ENCODE measurements at regions of chr20 and their contacts with region 1.

Region 1: GRCh38 chr20:32207626-32208498 is at the starts of genes PLAGL2 and POFUT1:
- DNase-seq: peak; percentile 76 to 84
- ATAC-seq: peak; percentile 54 to 79
- H3K4me3 ChIP-seq: peak within 1 kb of the TSS; percentile 76 to 97 (median 96)
- H3K27ac ChIP-seq: peak within 1 kb of the TSS; percentile 89 to 97 (median 94)
- H3K4me1 ChIP-seq: peaks cover 48 to 69% of the 10 kb centered on the region in 2 donors
- H3K27me3 ChIP-seq: no peaks in the 10 kb centered on the region
- CTCF ChIP-seq: peak in 4 of 5 experiments; percentile 11 to 34 (median 23)
- POLR2A ChIP-seq: peak; percentile 90 to 94
- total RNA-seq, gene PLAGL2: 1.4 to 6.5 (median 5.8) TPM
- total RNA-seq, gene POFUT1: 15.3 to 20.7 (median 18.4) TPM

Region 2: DNA sequence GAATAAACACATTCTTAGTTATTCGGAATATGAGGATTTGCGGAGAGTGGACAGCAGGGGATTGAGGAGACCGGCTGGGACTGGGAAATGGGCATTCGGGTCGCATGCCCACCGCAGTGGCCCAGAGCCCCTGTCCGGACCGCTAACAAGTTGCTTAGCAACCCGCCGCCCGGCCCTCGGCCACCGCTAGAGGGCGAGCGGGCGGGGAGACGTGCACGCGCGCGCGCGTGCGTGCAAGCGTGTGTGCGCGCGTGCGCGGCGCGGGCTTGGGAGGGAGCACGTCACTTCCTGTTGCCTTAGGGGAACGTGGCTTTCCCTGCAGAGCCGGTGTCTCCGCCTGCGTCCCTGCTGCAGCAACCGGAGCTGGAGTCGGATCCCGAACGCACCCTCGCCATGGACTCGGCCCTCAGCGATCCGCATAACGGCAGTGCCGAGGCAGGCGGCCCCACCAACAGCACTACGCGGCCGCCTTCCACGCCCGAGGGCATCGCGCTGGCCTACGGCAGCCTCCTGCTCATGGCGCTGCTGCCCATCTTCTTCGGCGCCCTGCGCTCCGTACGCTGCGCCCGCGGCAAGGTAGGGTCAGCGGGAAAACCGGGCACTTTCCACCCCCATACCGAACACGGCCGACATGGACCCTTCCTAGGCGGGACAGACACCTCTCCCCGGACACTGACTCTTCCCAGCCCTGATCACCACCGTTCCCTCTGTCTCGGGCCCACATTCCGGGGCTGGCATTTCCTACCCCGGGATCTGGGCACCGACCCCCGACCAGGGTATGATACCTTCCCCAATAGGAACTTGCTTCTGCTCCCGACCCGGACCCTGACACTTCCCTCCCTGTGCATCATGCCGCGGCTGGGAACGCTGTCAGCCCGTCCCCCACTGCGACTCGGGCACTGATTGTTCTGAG is 693.4 kb before region 1 on chr20 and contains the start of gene HM13:
- in situ Hi-C with region 1: no loop called
- intact Hi-C with region 1: loop called (anchors 10 kb)
- DNase-seq: peak; percentile 86 to 89
- ATAC-seq: peak; percentile 89 to 93
- H3K4me3 ChIP-seq: peak within 1 kb of the TSS; percentile 72 to 96 (median 88)
- H3K27ac ChIP-seq: peak within 1 kb of the TSS; percentile 88 to 95 (median 90)
- H3K4me1 ChIP-seq: peaks cover 27 to 34% of the 10 kb centered on the region in 2 donors
- H3K27me3 ChIP-seq: no peaks in the 10 kb centered on the region
- CTCF ChIP-seq: peak; percentile 87 to 99 (median 99)
- POLR2A ChIP-seq: peak; percentile 89 to 96
- total RNA-seq, gene HM13: 22.7 to 31.0 (median 26.4) TPM

Region 3: DNA sequence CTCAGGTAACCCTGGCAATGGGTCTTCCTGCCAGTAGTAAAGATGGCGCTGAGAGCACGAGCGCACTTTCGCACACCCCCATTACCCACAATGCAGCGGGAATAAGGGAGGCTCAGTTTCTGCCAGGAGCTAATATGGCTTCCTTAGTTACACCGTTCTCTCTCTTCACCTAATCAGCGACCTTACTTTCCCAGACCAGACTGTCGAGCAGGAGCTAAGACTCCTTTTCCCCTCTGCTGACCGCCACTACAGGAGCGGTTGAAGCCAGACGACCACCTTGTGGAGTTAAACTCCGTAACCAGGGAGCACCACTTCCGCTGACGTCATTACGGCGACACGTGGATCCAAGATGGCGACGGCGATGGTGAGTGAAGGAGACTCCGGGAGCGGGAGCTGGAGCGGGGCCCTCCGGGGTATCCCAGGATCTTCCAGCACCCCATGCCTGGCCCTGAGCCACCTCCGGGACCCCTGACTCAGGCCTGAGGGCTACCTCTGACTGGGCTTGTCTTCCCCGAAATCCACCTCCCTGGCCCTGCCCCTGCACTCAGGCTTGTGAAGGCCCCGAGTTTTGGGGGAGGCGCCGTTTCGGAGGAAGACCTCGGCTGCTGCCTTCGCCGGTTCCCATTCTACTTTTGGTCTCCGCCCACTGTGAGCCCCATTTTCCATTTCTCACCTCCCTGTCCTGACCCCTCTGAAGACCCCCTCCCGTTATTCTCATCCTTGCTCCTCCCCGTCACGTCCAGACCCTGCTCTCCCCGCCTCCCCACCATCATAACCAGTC is 98.3 kb before region 1 on chr20 and contains the start of gene TM9SF4:
- in situ Hi-C with region 1: loop called in 1 of 4 experiments (anchors 10 kb)
- intact Hi-C with region 1: loop called (anchors 2 kb)
- DNase-seq: peak; percentile 85
- ATAC-seq: peak; percentile 97 to 99
- H3K4me3 ChIP-seq: peak within 1 kb of the TSS; percentile 94 to 100 (median 96)
- H3K27ac ChIP-seq: peak within 1 kb of the TSS; percentile 98 to 100 (median 99)
- H3K4me1 ChIP-seq: peaks cover 17 to 30% of the 10 kb centered on the region in 2 donors
- H3K27me3 ChIP-seq: no peaks in the 10 kb centered on the region
- CTCF ChIP-seq: no peak
- POLR2A ChIP-seq: peak; percentile 57 to 62
- total RNA-seq, gene TM9SF4: 18.0 to 22.9 (median 21.0) TPM

Region 4: DNA sequence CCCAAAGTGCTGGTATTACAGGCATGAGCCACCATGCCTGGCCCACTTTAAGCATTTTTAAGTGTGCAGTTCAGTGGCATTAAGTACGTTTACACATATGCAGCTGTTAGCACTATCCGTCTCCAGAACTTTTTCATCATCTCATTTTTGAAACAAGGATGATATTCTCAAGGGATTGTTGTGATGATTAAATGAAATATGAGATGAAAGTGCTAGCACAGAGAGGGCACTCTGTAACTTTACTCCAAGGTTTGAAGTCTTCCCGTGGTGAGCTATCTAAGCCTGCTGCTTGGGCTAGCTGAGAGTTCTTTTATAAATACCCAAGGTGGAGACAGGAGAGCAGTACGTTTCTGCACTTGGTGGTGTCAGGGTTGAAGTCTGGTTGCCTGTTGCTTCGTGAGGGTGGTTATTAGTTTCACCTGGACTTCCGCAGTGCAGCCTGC is 91.8 kb before region 1 on chr20:
- in situ Hi-C with region 1: loop called in 1 of 4 experiments (anchors 10 kb)
- intact Hi-C with region 1: loop called (anchors 2 kb)
- DNase-seq: peak; percentile 14 to 51
- ATAC-seq: peak; percentile 95
- H3K4me3 ChIP-seq: no peak overlapping the region
- H3K27ac ChIP-seq: peak overlapping the region; percentile 69 to 85 (median 82)
- H3K4me1 ChIP-seq: peaks cover 39 to 52% of the 10 kb centered on the region in 2 donors
- H3K27me3 ChIP-seq: no peaks in the 10 kb centered on the region
- CTCF ChIP-seq: no peak
- POLR2A ChIP-seq: peak in 1 of 2 donors; percentile 28

Region 5: GRCh38 chr20:32155017-32155981 is 52.6 kb before region 1 on chr20:
- in situ Hi-C with region 1: no loop called
- intact Hi-C with region 1: loop called (anchors 5 kb)
- DNase-seq: peak; percentile 64 to 81
- ATAC-seq: peak; percentile 76 to 87
- H3K4me3 ChIP-seq: no peak overlapping the region
- H3K27ac ChIP-seq: peak overlapping the region; percentile 56 to 73 (median 66)
- H3K4me1 ChIP-seq: peaks cover 9 to 17% of the 10 kb centered on the region in 2 donors
- H3K27me3 ChIP-seq: no peaks in the 10 kb centered on the region
- CTCF ChIP-seq: peak in 3 of 5 experiments; percentile 11 to 27 (median 14)
- POLR2A ChIP-seq: no peak

Region 6: DNA sequence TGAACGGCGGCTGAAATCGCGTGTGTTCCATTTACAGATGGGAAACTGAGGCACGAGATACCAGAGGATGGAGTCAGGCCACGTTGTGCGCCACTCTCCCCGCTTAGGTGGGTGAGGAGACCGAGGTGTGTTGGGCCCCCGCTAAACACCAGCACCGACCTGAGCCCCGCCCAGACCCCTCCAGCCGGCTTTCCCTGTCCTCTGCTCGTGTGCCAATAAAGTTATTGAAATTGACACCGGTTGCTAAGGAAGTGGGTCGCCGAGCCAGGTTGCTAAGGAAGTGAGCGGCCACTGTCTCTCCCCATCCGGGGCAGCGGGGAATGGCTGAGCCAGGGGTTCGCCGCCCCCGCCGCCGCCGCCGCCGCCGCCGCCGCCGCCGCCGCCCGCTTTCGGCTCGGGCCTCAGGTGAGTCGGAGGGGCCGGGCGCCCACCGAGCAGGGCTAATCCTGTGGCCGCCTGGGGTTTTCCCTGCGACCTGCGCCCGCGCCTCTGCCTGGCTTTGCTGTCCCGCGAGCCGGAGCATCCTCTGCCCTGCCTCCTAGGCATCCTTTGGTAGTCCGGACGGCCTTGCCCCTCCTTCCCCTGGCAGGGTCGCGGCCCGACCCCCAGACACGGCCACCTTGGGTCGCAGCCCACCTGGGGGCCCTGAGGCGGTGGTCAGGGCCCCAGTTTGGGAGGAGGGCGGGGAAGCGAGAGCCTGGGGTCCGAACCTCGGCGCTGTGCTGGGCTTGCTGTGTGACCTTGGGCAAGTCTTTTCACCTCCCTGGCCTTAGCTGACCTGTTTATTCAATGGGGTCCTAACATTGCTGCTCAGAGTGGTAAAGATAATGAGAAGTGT is 69.7 kb after region 1 on chr20 and contains the start of gene KIF3B:
- in situ Hi-C with region 1: no loop called
- intact Hi-C with region 1: loop called (anchors 5 kb)
- DNase-seq: peak; percentile 79 to 83
- ATAC-seq: peak; percentile 97 to 99
- H3K4me3 ChIP-seq: peak within 1 kb of the TSS; percentile 79 to 96 (median 86)
- H3K27ac ChIP-seq: peak within 1 kb of the TSS; percentile 20 to 74 (median 63)
- H3K4me1 ChIP-seq: peaks cover 12 to 17% of the 10 kb centered on the region in 2 donors
- H3K27me3 ChIP-seq: no peaks in the 10 kb centered on the region
- CTCF ChIP-seq: no peak
- POLR2A ChIP-seq: peak; percentile 27 to 42
- total RNA-seq, gene KIF3B: 4.8 to 8.7 (median 6.4) TPM

Region 7: GRCh38 chr20:32289661-32290431 is 82.0 kb after region 1 on chr20:
- in situ Hi-C with region 1: no loop called
- intact Hi-C with region 1: no loop called
- DNase-seq: no peak
- ATAC-seq: no peak
- H3K4me3 ChIP-seq: no peak overlapping the region
- H3K27ac ChIP-seq: no peak overlapping the region
- H3K4me1 ChIP-seq: peaks cover 10 to 16% of the 10 kb centered on the region in 2 donors
- H3K27me3 ChIP-seq: no peaks in the 10 kb centered on the region
- CTCF ChIP-seq: no peak
- POLR2A ChIP-seq: no peak

Region 8: GRCh38 chr20:32343438-32343837 is 135.6 kb after region 1 on chr20:
- in situ Hi-C with region 1: no loop called
- intact Hi-C with region 1: no loop called
- DNase-seq: no peak
- ATAC-seq: no peak
- H3K4me3 ChIP-seq: no peak overlapping the region
- H3K27ac ChIP-seq: no peak overlapping the region
- H3K4me1 ChIP-seq: no peaks in the 10 kb centered on the region
- H3K27me3 ChIP-seq: no peaks in the 10 kb centered on the region
- CTCF ChIP-seq: no peak
- POLR2A ChIP-seq: no peak

Region 9: DNA sequence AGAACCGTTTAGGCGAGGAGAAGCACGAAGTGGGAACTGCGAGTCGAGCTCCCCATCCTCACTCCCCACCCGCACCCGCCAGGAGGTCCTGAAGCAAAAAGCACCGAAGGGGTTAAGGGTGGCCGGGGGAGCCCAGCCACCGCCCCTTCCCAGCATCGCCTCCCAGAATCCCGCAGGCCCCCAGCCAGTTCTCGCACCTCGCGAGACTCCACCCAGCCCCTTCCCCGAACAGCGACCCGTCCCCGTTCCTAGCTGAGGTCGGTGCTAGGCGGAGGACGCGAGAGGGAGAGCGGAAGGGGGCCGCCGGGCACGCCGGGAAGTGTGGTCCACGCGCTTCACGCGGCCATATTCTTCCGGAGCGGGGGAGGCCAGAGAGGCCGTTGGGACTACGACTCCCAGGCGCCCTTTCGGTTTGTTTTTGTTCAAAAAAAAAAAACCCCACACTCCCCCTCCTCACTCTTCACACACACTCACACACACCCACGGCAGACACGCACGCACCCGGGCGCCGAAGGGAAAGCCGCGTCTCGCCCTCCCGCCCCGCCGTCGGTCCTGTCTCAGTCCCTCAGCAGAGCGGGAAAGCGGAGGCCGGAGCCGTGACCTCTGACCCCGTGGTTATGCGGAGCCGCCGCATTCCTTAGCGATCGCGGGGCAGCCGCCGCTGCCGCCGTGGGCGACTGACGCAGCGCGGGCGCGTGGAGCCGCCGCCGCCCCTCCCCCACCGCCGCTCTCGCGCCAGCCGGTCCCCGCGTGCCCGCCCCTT is 150.2 kb after region 1 on chr20 and contains the start of gene ASXL1:
- in situ Hi-C with region 1: no loop called
- intact Hi-C with region 1: loop called (anchors 1 kb)
- DNase-seq: peak; percentile 96 to 97
- ATAC-seq: peak; percentile 90 to 91
- H3K4me3 ChIP-seq: peak within 1 kb of the TSS; percentile 75 to 98 (median 90)
- H3K27ac ChIP-seq: peak within 1 kb of the TSS; percentile 97 to 99 (median 98)
- H3K4me1 ChIP-seq: peaks cover 31 to 37% of the 10 kb centered on the region in 2 donors
- H3K27me3 ChIP-seq: no peaks in the 10 kb centered on the region
- CTCF ChIP-seq: no peak
- POLR2A ChIP-seq: peak; percentile 28 to 39
- total RNA-seq, gene ASXL1: 21.8 to 36.6 (median 28.4) TPM